IMR-90 (cell line): ENCODE measurements at regions of chr5 and their contacts with region 1.

Region 1: DNA sequence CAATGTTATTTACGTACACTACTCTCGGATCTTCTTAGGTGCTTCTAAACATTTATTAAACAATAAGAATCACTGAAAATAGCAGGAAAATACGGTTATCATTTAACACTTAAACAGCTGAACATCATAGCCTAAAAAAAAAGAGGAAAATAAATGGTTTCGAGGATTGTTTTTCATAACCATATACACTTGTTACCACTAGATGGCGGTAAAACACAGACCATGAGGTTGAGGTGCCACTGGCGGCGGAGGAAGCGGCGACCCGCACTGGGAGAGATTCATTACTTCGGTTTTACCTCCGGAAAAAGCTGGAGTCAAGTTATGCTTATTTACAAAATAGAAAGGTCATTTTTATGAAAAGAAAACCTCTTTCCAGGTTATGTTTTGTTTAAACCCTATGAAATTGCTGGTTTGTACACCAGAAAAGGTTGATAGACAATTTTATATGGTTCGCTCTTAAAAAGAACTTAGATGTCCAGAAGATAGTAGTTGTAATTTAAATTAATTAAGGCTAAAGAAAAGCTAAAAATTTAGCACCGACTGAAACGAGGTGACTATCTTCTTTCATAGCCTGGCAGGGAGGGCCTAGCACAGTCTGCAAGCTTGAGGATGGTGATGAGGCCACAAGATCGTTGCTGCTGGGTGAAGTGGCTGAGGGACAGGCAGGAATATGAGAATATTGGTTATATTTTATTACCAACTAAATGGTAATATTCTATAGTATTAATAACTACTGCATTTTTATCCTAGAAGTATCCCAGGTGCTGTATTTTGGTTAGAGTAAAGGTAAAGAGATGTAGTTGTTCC is 605.7 kb downstream of the RAB3C start:
- DNase-seq: peak; percentile 70
- ATAC-seq: peak; percentile 88
- H3K4me3 ChIP-seq: no peak overlapping the region
- H3K27ac ChIP-seq: no peak overlapping the region
- H3K4me1 ChIP-seq: no peaks in the 10 kb centered on the region
- H3K27me3 ChIP-seq: no peaks in the 10 kb centered on the region
- CTCF ChIP-seq: peak; percentile 86
- POLR2A ChIP-seq: no peak
- RAD21 ChIP-seq: peak; percentile 92

Region 2: DNA sequence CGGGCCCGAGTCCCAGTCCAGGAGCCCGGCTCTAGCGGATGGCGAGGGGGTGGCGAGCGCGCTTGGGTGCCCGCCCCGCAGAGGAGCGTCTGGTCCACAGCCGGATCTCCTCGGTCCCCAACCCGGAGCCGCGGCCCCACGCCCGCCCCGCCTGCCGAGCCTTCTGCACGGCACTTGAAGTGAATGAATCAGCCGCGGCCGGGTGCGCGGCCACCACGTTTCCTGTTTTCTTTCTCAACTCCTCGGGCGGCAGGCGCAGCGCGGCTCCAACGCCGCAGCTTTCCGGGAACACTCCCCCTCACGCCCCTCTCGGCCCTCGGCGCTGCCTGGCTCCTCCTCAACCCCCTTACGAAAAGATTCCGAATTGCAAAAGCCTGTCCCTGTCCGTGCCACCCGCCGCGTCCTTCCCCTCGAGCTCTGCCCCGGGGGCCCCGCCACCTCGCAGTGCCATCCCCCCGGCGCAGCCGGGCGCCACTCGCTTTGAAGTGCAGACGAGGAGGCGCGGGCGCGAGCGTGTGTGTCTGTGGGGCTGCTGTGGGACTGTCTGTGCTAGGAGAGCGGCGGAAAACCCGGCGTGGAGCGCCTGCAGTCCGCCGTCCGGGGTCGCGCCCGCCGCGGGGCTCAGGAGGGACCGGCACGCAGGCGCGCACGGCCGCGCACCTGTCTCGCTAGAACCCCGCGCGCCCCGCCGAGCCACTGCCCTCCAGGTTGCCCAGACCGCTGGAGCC is 149.2 kb before region 1 on chr5:
- CTCF ChIA-PET with region 1: no interaction called
- POLR2A ChIA-PET with region 1: no interaction called
- dilution Hi-C with region 1: no loop called
- in situ Hi-C with region 1: no loop called
- intact Hi-C with region 1: loop called (anchors 5 kb)
- DNase-seq: peak; percentile 76
- ATAC-seq: peak; percentile 64
- H3K4me3 ChIP-seq: peak overlapping the region; percentile 99
- H3K27ac ChIP-seq: peak overlapping the region; percentile 98
- H3K4me1 ChIP-seq: peaks cover 9% of the 10 kb centered on the region
- H3K27me3 ChIP-seq: no peaks in the 10 kb centered on the region
- CTCF ChIP-seq: no peak
- POLR2A ChIP-seq: peak; percentile 74
- RAD21 ChIP-seq: peak; percentile 24

Region 3: GRCh38 chr5:59367791-59368394 is 179.3 kb after region 1 on chr5:
- CTCF ChIA-PET with region 1: interaction called, 27 read pairs
- POLR2A ChIA-PET with region 1: no interaction called
- dilution Hi-C with region 1: loop called (anchors 25 kb)
- in situ Hi-C with region 1: loop called (anchors 5 kb)
- intact Hi-C with region 1: loop called (anchors 1 kb)
- DNase-seq: peak; percentile 66
- ATAC-seq: peak; percentile 70
- H3K4me3 ChIP-seq: no peak overlapping the region
- H3K27ac ChIP-seq: no peak overlapping the region
- H3K4me1 ChIP-seq: no peaks in the 10 kb centered on the region
- H3K27me3 ChIP-seq: peaks cover 15% of the 10 kb centered on the region
- CTCF ChIP-seq: peak; percentile 74
- POLR2A ChIP-seq: no peak
- RAD21 ChIP-seq: peak; percentile 68

Region 4: DNA sequence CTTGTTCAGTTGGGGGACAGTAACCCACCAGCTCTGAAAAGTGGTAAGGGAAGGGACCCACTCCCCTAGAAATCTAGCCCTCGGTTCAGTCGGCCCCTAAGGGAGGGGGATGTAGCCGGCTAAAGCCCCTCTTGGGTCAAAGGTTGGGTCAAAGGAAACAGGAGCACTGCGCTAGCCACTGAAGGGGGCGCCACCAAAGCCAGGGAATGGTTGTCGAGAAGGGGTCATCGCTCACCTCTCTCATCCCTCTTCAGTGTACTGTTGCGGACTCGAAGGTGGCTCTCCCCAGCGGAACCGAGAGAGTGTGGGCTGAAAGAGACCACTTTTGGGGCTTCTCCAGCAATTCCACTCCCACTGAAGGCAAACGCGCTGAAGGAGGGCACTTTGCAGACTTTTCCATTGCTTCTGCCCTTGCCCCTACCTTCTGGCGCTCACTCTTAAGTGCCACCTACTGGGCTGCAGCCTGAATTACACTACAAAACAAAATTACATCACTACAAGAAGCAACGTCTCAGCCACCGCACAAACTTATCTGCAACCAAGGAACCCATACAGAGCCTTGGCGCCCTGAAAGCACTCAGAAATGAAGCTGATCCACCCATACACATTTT is 308.0 kb after region 1 on chr5:
- CTCF ChIA-PET with region 1: no interaction called
- POLR2A ChIA-PET with region 1: no interaction called
- dilution Hi-C with region 1: no loop called
- in situ Hi-C with region 1: no loop called
- intact Hi-C with region 1: loop called (anchors 5 kb)
- DNase-seq: peak; percentile 5
- ATAC-seq: no peak
- H3K4me3 ChIP-seq: no peak overlapping the region
- H3K27ac ChIP-seq: no peak overlapping the region
- H3K4me1 ChIP-seq: no peaks in the 10 kb centered on the region
- H3K27me3 ChIP-seq: peaks cover 1% of the 10 kb centered on the region; the same call in 1 of the 2 replicates
- CTCF ChIP-seq: peak; percentile 51
- POLR2A ChIP-seq: no peak
- RAD21 ChIP-seq: peak; percentile 24; the same call in 1 of the 2 replicates

Region 5: DNA sequence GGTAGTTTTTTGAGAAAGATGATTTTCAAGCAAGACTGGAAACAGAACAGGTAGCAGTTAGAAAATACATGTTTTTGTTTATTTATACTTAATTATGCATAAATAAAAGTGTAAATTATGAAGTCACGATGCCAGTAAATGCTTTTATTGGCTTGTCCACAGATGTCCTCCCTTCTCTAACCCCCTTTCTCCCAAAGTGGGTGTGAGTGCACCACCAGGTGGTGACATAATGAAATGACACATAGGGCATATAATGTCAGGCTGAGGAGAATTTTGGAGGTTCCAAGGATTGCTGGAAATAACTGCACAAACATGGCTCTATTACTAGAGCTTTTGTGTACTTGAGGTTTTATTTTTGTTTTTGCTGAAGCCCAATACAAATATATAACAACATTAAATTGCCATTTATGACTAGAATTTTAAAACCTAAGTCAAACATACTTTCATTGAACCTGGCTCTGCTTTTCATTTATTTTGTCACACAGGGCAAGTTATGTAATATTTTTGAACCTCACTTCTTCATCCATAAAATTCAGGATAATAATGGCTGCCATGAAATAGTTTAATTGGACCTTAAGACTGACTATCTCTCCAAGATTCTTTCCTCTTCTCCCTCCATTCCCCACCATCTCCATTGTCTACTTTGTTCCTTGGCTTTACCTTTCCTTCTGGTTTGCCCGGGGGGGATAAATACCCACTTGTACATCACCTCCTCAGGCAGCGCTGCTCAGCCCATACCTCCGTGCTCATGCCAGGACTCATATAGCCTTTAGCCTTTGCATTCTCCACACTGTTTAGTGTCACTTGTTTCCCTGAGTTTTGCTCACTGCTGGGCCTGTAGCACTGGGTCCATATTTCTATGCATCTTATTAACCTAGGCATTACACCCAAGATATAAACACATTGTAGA is 536.1 kb after region 1 on chr5:
- CTCF ChIA-PET with region 1: no interaction called
- POLR2A ChIA-PET with region 1: no interaction called
- dilution Hi-C with region 1: no loop called
- in situ Hi-C with region 1: no loop called
- intact Hi-C with region 1: loop called (anchors 5 kb)
- DNase-seq: peak; percentile 36
- ATAC-seq: peak; percentile 89
- H3K4me3 ChIP-seq: no peak overlapping the region
- H3K27ac ChIP-seq: peak overlapping the region; percentile 52
- H3K4me1 ChIP-seq: no peaks in the 10 kb centered on the region
- H3K27me3 ChIP-seq: no peaks in the 10 kb centered on the region
- CTCF ChIP-seq: peak; percentile 52
- POLR2A ChIP-seq: no peak
- RAD21 ChIP-seq: peak; percentile 49